ENCODE measurements at regions of chr10 and their contacts with region 1.

Region 1: DNA sequence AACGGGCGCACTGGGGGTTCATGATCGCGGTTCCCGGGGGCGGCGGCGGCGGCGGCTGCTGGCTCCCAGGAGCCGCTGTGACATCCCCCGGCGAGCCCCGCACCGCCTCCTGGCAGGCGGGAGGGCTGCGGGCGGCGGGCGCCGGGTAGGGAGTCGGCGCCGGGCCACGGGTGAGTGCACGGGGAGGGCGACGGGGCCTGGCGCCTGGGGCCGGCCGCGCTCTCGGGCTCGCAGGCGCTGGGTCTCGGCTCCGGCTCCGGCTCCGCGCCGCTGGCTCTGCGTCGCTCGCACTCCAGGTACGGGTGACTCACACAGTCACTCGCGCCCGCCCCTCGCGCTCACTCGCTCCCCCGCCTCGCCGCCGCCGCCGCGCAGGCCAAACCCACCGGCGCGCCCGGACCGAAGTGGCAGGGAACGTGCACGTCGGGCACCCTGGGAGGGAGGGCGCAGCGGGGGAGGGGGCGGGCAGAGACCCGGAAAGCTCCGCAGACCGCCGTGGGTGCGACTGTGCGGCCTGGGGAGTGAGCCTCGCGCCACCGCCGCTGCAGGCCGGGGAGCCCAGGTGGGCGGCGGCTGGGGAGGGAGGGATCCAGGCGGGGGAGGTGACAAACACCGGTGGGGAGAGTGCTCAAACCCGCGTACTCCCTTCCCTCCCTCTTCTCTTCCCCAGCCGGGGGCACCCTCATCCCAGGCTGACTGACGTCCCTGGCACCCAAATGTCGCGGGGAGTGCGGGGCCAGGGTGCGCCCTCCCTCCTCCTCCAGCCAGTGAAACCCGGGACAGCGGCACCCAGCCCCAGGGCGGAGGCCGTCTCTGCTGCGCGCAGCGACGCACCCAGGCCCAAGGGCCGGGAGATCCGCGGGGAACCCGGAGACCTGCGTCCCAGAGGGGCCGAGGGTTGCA is 277.0 kb upstream of the NEBL start:
- DNase-seq: no peak
- ATAC-seq: peak; percentile 85
- H3K4me3 ChIP-seq: peak overlapping the region; percentile 69 to 78
- H3K27ac ChIP-seq: peak overlapping the region; percentile 93
- H3K4me1 ChIP-seq: peaks cover 37% of the 10 kb centered on the region
- H3K27me3 ChIP-seq: no peaks in the 10 kb centered on the region
- CTCF ChIP-seq: peak; percentile 21; the same call in 1 of the 2 replicates

Region 2: GRCh38 chr10:21068025-21068656 is 105.9 kb before region 1 on chr10:
- CTCF ChIA-PET with region 1: no interaction called
- POLR2A ChIA-PET with region 1: no interaction called
- in situ Hi-C with region 1: no loop called
- intact Hi-C with region 1: no loop called
- DNase-seq: no peak
- ATAC-seq: no peak
- H3K4me3 ChIP-seq: no peak overlapping the region
- H3K27ac ChIP-seq: no peak overlapping the region
- H3K4me1 ChIP-seq: no peaks in the 10 kb centered on the region; the same call in 1 of the 2 replicates
- H3K27me3 ChIP-seq: no peaks in the 10 kb centered on the region
- CTCF ChIP-seq: no peak

Region 3: DNA sequence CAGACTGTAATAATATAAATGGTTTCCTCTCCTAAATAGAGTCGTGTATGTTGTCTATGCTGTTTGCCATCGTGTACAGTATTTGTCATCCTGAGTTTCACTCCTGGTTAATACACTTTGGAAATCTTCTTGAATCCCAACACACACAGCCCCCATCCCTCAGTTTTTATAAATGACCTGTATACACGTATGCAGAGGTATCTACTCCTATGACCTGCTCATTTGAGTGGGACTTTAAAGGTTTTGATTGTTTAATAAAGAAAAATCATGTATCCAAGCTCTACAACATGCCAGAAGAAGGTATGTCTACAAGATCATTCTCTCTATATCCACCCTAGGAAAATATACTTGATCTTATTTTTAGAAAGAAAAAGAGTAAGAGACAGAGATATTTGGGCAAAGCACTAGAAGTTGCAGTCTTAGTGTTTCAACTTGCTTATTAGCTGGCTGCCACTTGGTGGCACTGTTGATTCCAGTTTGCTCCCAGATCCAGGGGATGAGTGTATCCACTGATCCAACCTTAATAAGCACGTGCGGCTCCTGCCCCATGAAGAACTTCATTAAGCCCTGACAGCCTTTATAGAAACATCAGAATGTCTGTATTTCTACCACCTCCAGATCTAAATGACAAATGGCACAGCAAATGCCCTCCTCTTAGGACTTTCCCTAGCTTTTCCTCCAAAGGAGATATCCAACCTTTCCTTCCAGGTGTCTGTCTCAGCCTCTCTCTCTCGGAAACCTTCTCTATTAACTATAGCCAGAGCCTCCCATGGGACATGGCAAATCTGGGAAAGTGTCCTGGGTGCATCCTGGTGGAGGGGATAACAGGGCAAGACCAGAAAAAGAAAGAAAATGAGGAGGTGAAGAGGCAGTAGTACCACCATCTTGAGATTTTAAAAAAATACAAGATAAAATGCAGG is 95.4 kb before region 1 on chr10:
- CTCF ChIA-PET with region 1: no interaction called
- POLR2A ChIA-PET with region 1: no interaction called
- in situ Hi-C with region 1: no loop called
- intact Hi-C with region 1: loop called (anchors 5 kb)
- DNase-seq: peak; percentile 41
- ATAC-seq: peak; percentile 95
- H3K4me3 ChIP-seq: no peak overlapping the region
- H3K27ac ChIP-seq: peak overlapping the region; percentile 79
- H3K4me1 ChIP-seq: peaks cover 16% of the 10 kb centered on the region
- H3K27me3 ChIP-seq: no peaks in the 10 kb centered on the region
- CTCF ChIP-seq: peak; percentile 76

Region 4: GRCh38 chr10:21265621-21266020 is 91.6 kb after region 1 on chr10:
- CTCF ChIA-PET with region 1: no interaction called
- POLR2A ChIA-PET with region 1: interaction called, 6 read pairs
- in situ Hi-C with region 1: no loop called
- intact Hi-C with region 1: loop called (anchors 10 kb)
- DNase-seq: no peak
- ATAC-seq: no peak
- H3K4me3 ChIP-seq: no peak overlapping the region
- H3K27ac ChIP-seq: no peak overlapping the region
- H3K4me1 ChIP-seq: no peaks in the 10 kb centered on the region
- H3K27me3 ChIP-seq: no peaks in the 10 kb centered on the region
- CTCF ChIP-seq: no peak

Region 5: GRCh38 chr10:21525367-21526183 is 351.5 kb after region 1 on chr10 and contains the start of gene SKIDA1:
- CTCF ChIA-PET with region 1: no interaction called
- POLR2A ChIA-PET with region 1: no interaction called
- in situ Hi-C with region 1: no loop called
- intact Hi-C with region 1: loop called (anchors 10 kb)
- DNase-seq: no peak
- ATAC-seq: peak; percentile 77
- H3K4me3 ChIP-seq: peak within 1 kb of the TSS; percentile 48 to 78
- H3K27ac ChIP-seq: peak within 1 kb of the TSS; percentile 97
- H3K4me1 ChIP-seq: peaks cover 44% of the 10 kb centered on the region
- H3K27me3 ChIP-seq: no peaks in the 10 kb centered on the region
- CTCF ChIP-seq: no peak
- total RNA-seq, gene SKIDA1: 9.3 TPM